MCF 10A (cell line): ENCODE measurements at regions of chr4 and their contacts with region 1.

Region 1: GRCh38 chr4:24419181-24420034 is 164.9 kb downstream of the DHX15 start:
- DNase-seq: peak; percentile 85
- H3K4me3 Mint-ChIP-seq: no peak overlapping the region
- H3K27ac Mint-ChIP-seq: peak overlapping the region; percentile 36
- H3K4me1 Mint-ChIP-seq: peaks cover 16% of the 10 kb centered on the region
- H3K27me3 Mint-ChIP-seq: no peaks in the 10 kb centered on the region
- CTCF ChIP-seq: peak; percentile 90

Region 2: DNA sequence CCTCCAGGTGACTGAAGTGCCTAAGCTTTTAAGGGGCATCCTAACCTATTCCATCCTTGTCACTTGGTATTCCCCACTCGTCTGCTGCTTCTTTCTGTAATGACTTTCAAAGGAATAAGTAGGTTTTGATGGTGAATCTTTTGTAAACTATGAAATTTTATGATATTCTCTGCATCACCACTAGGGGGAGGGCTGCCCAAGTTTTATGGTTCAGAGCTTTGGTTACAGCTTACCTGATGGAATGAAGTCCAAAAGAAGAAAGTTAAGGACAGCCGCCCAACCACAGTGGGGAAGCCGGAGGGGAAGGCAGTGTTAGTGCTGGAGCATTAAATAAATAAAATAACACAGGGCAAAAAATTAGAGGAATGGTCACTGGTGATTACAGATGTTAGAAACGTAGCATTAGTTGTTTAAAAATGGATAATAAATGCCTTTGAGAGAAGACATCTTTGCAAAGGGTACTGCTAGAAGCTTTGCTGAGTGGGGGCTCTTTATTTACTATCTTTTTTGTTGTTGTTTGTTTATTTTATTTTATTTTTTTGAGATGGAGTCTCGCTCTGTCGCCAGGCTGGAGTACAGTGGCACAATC is 1521.8 kb before region 1 on chr4:
- CTCF ChIA-PET with region 1: interaction called, 5 read pairs
- POLR2A ChIA-PET with region 1: no interaction called
- intact Hi-C with region 1: loop called (anchors 2 kb)
- DNase-seq: peak; percentile 53
- H3K4me3 Mint-ChIP-seq: no peak overlapping the region
- H3K27ac Mint-ChIP-seq: no peak overlapping the region
- H3K4me1 Mint-ChIP-seq: no peaks in the 10 kb centered on the region
- H3K27me3 Mint-ChIP-seq: no peaks in the 10 kb centered on the region
- CTCF ChIP-seq: peak; percentile 62

Region 3: DNA sequence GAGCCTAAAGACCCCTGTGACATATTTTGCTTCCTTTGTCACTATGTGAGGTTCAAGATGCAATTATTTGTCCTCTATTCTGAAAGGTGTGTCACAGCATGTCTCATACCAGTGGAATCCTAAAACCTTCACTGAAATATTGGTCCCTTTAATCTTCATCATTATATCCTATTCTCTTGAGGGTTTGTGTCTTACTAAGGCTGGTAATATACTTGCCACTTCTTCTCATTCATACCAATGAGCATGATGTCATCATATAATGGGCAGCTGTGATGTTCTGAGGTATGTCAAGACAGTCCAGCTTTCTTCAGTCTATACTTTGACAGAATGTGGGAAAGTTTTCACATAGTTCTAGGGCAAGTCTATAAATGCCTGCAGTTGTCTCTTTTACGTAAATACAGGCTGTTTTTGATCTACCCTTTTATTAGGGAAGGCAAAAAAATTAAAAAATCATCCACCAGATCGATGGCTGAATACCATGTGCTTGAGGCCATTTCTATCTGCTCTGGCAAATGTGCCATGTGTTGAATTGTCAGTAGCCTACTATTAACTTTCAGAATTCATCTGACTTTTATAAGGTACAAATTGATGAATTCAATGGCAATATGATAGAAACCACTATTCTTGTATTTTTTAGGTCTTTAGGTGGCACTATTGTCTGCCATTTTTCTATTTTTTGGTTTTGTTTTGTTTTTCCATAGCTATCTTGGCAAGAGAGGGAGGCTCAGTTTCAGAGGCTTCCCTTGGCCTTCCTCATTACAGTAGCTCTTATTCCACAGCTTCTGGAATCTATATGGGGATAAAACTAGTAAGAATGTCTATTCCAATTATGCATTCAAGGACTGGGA is 738.5 kb before region 1 on chr4:
- CTCF ChIA-PET with region 1: interaction called, 4 read pairs
- POLR2A ChIA-PET with region 1: no interaction called
- intact Hi-C with region 1: loop called (anchors 1 kb)
- DNase-seq: peak; percentile 9
- H3K4me3 Mint-ChIP-seq: no peak overlapping the region
- H3K27ac Mint-ChIP-seq: no peak overlapping the region
- H3K4me1 Mint-ChIP-seq: no peaks in the 10 kb centered on the region
- H3K27me3 Mint-ChIP-seq: no peaks in the 10 kb centered on the region
- CTCF ChIP-seq: no peak

Region 4: DNA sequence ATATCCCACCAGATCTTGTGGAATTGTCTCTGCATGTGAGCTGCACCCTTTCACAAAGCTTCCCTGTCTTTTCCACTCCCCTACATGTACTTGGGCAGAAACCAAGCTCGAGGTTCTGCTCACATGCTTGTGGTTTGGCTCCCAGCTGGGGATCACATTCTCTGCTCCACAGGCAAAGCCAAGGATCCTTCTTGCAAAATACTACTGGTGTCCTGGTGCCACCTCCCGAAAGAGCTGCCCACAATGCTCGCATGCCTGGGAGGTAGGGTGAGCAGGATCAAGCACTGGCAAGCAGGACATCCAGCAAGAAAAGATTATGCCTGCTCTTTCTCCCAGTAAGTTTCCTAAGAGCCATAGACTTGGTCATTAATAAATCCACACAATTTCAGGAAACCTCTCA is 484.5 kb before region 1 on chr4:
- CTCF ChIA-PET with region 1: interaction called, 29 read pairs
- POLR2A ChIA-PET with region 1: interaction called, 4 read pairs
- intact Hi-C with region 1: loop called (anchors 1 kb)
- DNase-seq: peak; percentile 96
- H3K4me3 Mint-ChIP-seq: peak overlapping the region; percentile 46
- H3K27ac Mint-ChIP-seq: peak overlapping the region; percentile 57
- H3K4me1 Mint-ChIP-seq: peaks cover 57% of the 10 kb centered on the region
- H3K27me3 Mint-ChIP-seq: no peaks in the 10 kb centered on the region
- CTCF ChIP-seq: no peak

Region 5: GRCh38 chr4:24105183-24106038 is 314.0 kb before region 1 on chr4:
- CTCF ChIA-PET with region 1: interaction called, 19 read pairs
- POLR2A ChIA-PET with region 1: interaction called, 5 read pairs
- intact Hi-C with region 1: loop called (anchors 1 kb)
- DNase-seq: peak; percentile 96
- H3K4me3 Mint-ChIP-seq: peak overlapping the region; percentile 51
- H3K27ac Mint-ChIP-seq: peak overlapping the region; percentile 98
- H3K4me1 Mint-ChIP-seq: peaks cover 26% of the 10 kb centered on the region
- H3K27me3 Mint-ChIP-seq: no peaks in the 10 kb centered on the region
- CTCF ChIP-seq: no peak

Region 6: GRCh38 chr4:24408640-24409039 is 10.8 kb before region 1 on chr4:
- CTCF ChIA-PET with region 1: interaction called, 10 read pairs
- POLR2A ChIA-PET with region 1: no interaction called
- intact Hi-C with region 1: no loop called
- DNase-seq: no peak
- H3K4me3 Mint-ChIP-seq: no peak overlapping the region
- H3K27ac Mint-ChIP-seq: no peak overlapping the region
- H3K4me1 Mint-ChIP-seq: no peaks in the 10 kb centered on the region
- H3K27me3 Mint-ChIP-seq: no peaks in the 10 kb centered on the region
- CTCF ChIP-seq: no peak

Region 7: GRCh38 chr4:24482871-24483270 is 63.5 kb after region 1 on chr4:
- CTCF ChIA-PET with region 1: no interaction called
- POLR2A ChIA-PET with region 1: no interaction called
- intact Hi-C with region 1: no loop called
- DNase-seq: no peak
- H3K4me3 Mint-ChIP-seq: no peak overlapping the region
- H3K27ac Mint-ChIP-seq: no peak overlapping the region
- H3K4me1 Mint-ChIP-seq: no peaks in the 10 kb centered on the region
- H3K27me3 Mint-ChIP-seq: peaks cover 18% of the 10 kb centered on the region
- CTCF ChIP-seq: no peak